Activated CD4-positive, alpha-beta T cell treated with anti-CD3 and anti-CD28 coated beads, Interleukin-2, amount 10 ng/mL, durations not matched to agents 24 days and 14 days (primary cell): ENCODE measurements at regions of chr4 and their contacts with region 1.

Region 1: DNA sequence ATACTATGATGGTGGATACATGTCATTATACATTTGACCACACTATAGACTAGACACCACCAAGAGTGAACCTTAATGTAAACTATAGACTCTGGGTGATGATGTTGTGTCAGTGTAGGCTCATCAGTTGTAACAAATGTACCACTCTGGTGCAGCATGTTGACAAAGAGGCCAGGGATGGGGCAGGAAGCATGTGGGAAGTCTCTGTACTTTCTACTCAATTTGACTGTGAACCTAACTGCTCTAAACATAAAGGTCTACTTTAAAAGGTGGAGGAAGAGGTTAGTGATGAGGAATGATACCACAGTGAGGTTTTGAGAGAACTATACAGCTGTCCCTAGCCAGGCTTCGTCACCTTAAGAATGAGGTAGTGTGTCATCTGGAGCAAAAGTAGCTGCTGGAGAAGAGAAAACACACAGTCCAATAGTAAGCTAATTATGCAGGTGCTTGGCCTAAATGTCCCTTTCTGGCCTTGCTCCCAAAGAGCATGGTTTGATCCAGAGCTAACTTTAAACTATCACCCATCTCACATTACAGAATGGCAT is 38.4 kb downstream of the GRSF1 start:
- DNase-seq: peak; percentile 65
- H3K4me3 Mint-ChIP-seq: peak overlapping the region; percentile 21
- H3K27ac Mint-ChIP-seq: peak overlapping the region; percentile 74
- H3K4me1 Mint-ChIP-seq: peaks cover 16% of the 10 kb centered on the region
- H3K27me3 Mint-ChIP-seq: no peaks in the 10 kb centered on the region

Region 2: GRCh38 chr4:70734168-70734954 is 67.0 kb before region 1 on chr4:
- intact Hi-C with region 1: loop called (anchors 5 kb)
- DNase-seq: peak; percentile 85
- H3K4me3 Mint-ChIP-seq: peak overlapping the region; percentile 73
- H3K27ac Mint-ChIP-seq: peak overlapping the region; percentile 48
- H3K4me1 Mint-ChIP-seq: peaks cover 33% of the 10 kb centered on the region
- H3K27me3 Mint-ChIP-seq: no peaks in the 10 kb centered on the region

Region 3: GRCh38 chr4:70749313-70749712 is 52.0 kb before region 1 on chr4:
- intact Hi-C with region 1: loop called (anchors 2 kb)
- DNase-seq: no peak
- H3K4me3 Mint-ChIP-seq: no peak overlapping the region
- H3K27ac Mint-ChIP-seq: no peak overlapping the region
- H3K4me1 Mint-ChIP-seq: peaks cover 4% of the 10 kb centered on the region
- H3K27me3 Mint-ChIP-seq: peaks cover 5% of the 10 kb centered on the region